ENCODE measurements at regions of chrX and their contacts with region 1.

Region 1: GRCh38 chrX:56563231-56564161 is at the start of gene UBQLN2:
- DNase-seq: peak; percentile 65
- ATAC-seq: peak; percentile 76
- H3K4me3 ChIP-seq: peak within 1 kb of the TSS; percentile 90
- H3K27ac ChIP-seq: peak within 1 kb of the TSS; percentile 73
- H3K4me1 ChIP-seq: peaks cover 12% of the 10 kb centered on the region
- H3K27me3 ChIP-seq: no peaks in the 10 kb centered on the region
- CTCF ChIP-seq: peak; percentile 40; the same call in 1 of the 2 replicates
- total RNA-seq, gene UBQLN2: 9.7 and 16.6 TPM in 2 replicates

Region 2: GRCh38 chrX:56281789-56282188 is 281.7 kb before region 1 on chrX:
- CTCF ChIA-PET with region 1: no interaction called
- POLR2A ChIA-PET with region 1: no interaction called
- intact Hi-C with region 1: loop called (anchors 10 kb)
- DNase-seq: peak; percentile 54
- ATAC-seq: peak; percentile 57
- H3K4me3 ChIP-seq: no peak overlapping the region
- H3K27ac ChIP-seq: no peak overlapping the region
- H3K4me1 ChIP-seq: no peaks in the 10 kb centered on the region
- H3K27me3 ChIP-seq: peaks cover 14% of the 10 kb centered on the region; the same call in 1 of the 2 replicates
- CTCF ChIP-seq: peak; percentile 64

Region 3: DNA sequence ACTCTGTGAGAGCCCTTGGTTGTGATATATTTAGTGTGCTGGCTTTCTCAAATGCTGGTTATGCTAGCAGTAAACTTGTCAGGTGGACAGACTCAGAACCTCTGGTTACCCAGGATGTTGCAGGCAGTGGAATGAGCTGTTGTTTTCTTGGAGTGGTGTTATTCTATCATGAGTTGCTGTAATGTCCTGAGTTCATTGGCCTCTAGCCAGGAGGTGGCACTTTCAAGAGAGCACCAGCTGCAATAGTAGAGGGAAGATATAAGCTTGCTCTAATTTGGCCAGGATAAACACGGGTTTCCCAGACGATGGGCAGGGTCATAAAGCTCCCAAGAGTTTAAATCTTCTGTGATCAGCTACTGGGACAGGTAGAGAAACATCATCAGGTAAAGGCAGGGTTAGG is 95.1 kb before region 1 on chrX:
- CTCF ChIA-PET with region 1: no interaction called
- POLR2A ChIA-PET with region 1: no interaction called
- intact Hi-C with region 1: loop called (anchors 10 kb)
- DNase-seq: no peak
- ATAC-seq: no peak
- H3K4me3 ChIP-seq: no peak overlapping the region
- H3K27ac ChIP-seq: no peak overlapping the region
- H3K4me1 ChIP-seq: no peaks in the 10 kb centered on the region
- H3K27me3 ChIP-seq: no peaks in the 10 kb centered on the region
- CTCF ChIP-seq: no peak

Region 4: DNA sequence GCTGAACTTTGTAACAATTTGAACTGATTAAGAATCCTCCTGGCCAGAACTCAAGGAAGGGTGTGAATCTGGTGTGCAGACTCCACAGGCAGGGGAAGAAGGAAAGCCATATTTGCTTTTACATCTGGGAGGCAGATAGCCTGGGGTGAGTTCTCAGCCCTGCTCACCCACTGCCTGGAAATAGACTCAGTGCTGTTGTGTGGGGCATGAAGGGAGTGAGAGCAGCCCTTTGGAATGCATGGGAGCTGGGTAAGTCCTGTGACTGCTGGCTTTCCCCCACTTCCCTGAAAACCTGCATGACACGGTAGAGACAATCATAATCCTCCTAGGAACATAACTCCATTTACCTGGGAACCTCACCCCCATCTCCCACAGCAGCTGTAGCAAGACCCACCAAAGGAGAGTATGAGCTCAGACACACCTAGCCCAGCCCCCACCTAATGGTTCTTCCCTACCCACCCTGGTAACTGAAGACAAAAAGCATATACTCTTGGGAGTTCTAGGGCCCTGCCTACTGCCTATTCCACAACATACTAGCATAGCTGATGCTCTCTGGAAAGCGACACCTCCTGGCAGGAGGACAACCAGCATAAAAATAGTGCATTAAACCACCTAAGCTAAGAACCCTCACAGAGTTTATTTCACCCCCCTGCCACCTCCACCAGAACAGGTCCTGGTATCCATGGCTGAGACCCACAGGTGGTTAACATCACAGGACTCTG is 59.4 kb before region 1 on chrX:
- CTCF ChIA-PET with region 1: no interaction called
- POLR2A ChIA-PET with region 1: no interaction called
- intact Hi-C with region 1: loop called (anchors 2 kb)
- DNase-seq: peak; percentile 85
- ATAC-seq: peak; percentile 79
- H3K4me3 ChIP-seq: peak overlapping the region; percentile 23; the same call in 1 of the 2 replicates
- H3K27ac ChIP-seq: peak overlapping the region; percentile 98
- H3K4me1 ChIP-seq: peaks cover 50% of the 10 kb centered on the region
- H3K27me3 ChIP-seq: no peaks in the 10 kb centered on the region
- CTCF ChIP-seq: peak; percentile 44; the same call in 1 of the 2 replicates

Region 5: GRCh38 chrX:56519642-56520041 is 43.9 kb before region 1 on chrX:
- CTCF ChIA-PET with region 1: no interaction called
- POLR2A ChIA-PET with region 1: interaction called, 19 read pairs
- intact Hi-C with region 1: no loop called
- DNase-seq: no peak
- ATAC-seq: no peak
- H3K4me3 ChIP-seq: no peak overlapping the region
- H3K27ac ChIP-seq: no peak overlapping the region
- H3K4me1 ChIP-seq: no peaks in the 10 kb centered on the region
- H3K27me3 ChIP-seq: no peaks in the 10 kb centered on the region
- CTCF ChIP-seq: no peak

Region 6: GRCh38 chrX:56729152-56729850 is 165.8 kb after region 1 on chrX and contains the start of gene NBDY:
- CTCF ChIA-PET with region 1: no interaction called
- POLR2A ChIA-PET with region 1: no interaction called
- intact Hi-C with region 1: loop called (anchors 2 kb)
- DNase-seq: peak; percentile 50
- ATAC-seq: peak; percentile 87
- H3K4me3 ChIP-seq: peak within 1 kb of the TSS; percentile 87
- H3K27ac ChIP-seq: peak within 1 kb of the TSS; percentile 45
- H3K4me1 ChIP-seq: peaks cover 5% of the 10 kb centered on the region; the same call in 1 of the 2 replicates
- H3K27me3 ChIP-seq: no peaks in the 10 kb centered on the region
- CTCF ChIP-seq: no peak
- total RNA-seq, gene NBDY: 9.7 and 13.6 TPM in 2 replicates

Measured in PC-3 (cell line).